Activated naive CD4-positive, alpha-beta T cell treated with anti-CD3 and anti-CD28 coated beads for 36 hours (primary cell): ENCODE measurements at regions of chr16 and their contacts with region 1.

Region 1: DNA sequence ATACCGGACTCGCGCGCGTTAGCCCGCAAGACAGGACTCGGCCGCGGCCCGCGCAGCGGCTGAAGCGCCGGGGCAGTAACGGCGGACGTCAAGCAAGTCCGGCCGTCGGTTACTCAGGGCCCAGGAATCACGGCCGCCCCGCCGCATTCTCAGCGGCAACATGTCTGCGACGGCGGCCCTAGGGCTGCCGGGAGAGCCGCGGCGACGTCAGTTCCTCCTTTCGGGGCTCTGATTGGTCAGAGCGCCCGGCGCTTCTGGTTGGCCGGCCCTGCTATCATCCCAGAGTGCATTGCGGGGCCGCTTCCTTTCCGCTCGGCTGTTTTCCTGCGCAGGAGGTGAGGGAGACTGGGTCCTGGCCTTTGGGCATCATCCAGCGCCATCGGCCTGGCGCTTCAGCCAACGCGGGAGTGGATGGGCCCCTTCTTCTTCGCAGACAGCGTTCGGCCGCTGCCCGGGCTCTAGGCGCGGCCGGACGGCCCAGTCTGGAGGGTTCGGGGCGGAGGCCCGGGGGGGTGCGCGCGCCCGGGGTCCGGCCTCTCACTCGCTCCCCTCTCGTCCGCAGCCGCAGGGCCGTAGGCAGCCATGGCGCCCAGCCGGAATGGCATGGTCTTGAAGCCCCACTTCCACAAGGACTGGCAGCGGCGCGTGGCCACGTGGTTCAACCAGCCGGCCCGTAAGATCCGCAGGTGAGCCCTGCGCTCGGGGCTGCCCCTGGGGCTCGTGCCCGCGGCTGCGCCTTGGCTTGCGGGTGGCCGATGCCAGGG is at the start of gene RPL13:
- DNase-seq: peak; percentile 96
- H3K4me3 Mint-ChIP-seq: peak within 1 kb of the TSS; percentile 97
- H3K27ac Mint-ChIP-seq: peak within 1 kb of the TSS; percentile 98
- H3K4me1 Mint-ChIP-seq: peaks cover 46% of the 10 kb centered on the region
- H3K27me3 Mint-ChIP-seq: no peaks in the 10 kb centered on the region
- total RNA-seq, gene RPL13: 3,875 to 3,899 TPM

Region 2: DNA sequence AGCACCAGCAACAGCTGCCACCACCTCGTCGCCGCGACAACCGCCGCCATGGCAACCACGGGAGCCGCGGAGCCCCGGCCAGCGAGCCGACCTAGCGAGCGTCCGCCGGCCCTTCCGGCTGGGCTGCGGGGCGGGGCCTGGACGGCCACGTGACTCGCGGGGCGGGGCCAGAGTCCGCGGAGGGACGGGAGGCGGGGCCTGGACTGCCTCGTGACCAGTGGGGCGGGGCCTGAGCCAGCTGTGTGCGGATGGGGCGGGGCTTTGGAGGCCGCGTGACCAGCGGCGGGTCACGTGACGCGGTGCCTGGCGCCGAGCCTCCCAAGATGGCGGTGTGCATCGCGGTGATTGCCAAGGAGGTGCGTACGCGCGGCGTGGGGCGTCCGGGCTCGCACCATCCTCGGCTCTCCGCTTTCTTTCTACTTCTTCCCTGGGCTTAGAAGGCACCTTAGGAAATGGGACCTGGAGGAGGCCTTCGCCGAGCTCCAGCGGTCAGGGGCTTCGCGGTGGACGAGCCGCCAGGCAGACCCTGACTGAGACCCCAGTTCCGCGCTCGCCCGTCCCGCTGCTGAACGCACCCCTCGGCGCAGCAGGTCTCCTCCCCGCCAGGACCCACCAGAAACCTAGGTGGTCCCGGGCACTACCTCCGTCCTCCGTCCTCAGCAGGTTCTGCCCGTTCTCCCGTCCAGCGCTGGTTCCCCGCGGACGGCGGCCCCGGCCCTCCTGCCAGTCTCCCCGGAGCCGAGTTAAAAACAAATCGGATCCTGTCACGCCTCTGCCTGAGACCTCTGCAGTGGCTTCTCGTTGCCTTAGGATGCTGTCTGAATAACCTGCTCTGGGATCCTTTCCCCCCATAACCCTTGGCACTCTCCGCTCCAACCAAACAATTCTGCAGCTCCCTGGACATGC is 703.5 kb before region 1 on chr16 and contains the starts of genes GALNS and TRAPPC2L:
- CTCF ChIA-PET with region 1: no interaction called
- intact Hi-C with region 1: loop called (anchors 1 kb)
- DNase-seq: peak; percentile 99
- H3K4me3 Mint-ChIP-seq: peak within 1 kb of the TSS; percentile 88
- H3K27ac Mint-ChIP-seq: peak within 1 kb of the TSS; percentile 63
- H3K4me1 Mint-ChIP-seq: peaks cover 23% of the 10 kb centered on the region
- H3K27me3 Mint-ChIP-seq: no peaks in the 10 kb centered on the region
- total RNA-seq, gene GALNS: 10.9 to 11.2 TPM
- total RNA-seq, gene TRAPPC2L: 57.7 to 66.1 TPM

Region 3: GRCh38 chr16:89099905-89100304 is 460.7 kb before region 1 on chr16:
- CTCF ChIA-PET with region 1: no interaction called
- intact Hi-C with region 1: no loop called
- DNase-seq: no peak
- H3K4me3 Mint-ChIP-seq: no peak overlapping the region
- H3K27ac Mint-ChIP-seq: peak overlapping the region; percentile 44
- H3K4me1 Mint-ChIP-seq: peaks cover 64% of the 10 kb centered on the region
- H3K27me3 Mint-ChIP-seq: no peaks in the 10 kb centered on the region

Region 4: DNA sequence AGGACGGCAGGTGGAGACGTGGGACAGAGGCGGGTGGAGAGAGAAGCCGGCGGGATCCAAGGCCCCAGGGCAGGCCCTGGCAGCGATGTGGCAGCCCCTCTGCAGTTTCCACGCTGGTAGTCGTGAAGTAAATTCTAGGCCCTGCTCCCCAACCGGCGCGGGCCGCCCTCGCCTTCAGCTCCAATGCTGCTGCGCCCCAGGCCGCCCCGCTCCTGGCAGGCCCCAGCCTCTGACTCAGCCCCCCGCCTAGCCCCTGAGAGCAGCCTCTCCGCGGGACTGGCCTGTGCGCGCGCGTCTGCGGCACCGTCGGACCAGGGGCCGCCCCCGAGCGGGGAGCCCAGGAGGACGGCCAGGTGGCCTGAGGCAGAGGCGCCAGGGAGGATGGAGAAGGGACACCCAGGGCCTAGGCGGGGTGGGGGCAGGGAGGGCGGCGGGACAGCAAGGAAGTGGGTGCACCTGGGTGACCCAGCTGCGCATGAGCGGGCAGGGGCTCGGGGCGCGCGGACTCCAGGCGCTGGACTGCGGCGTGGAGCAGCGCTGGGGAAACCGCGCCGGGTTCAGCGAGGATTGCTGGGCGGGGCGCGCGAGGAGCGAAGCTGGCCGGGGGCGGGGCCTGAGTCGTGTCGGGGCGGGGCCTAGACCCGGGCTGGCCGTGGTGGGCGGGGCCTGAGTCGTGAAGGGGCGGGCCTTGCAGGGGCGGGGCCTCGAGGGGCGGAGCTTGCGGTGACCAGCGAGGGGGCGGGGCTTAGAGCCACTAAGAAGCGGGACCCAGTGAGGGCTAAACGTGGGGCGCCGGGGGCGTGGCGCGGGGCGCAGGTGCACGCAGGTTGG is 313.4 kb before region 1 on chr16:
- CTCF ChIA-PET with region 1: interaction called, 3 read pairs
- intact Hi-C with region 1: loop called (anchors 2 kb)
- DNase-seq: peak; percentile 96
- H3K4me3 Mint-ChIP-seq: peak overlapping the region; percentile 77
- H3K27ac Mint-ChIP-seq: no peak overlapping the region
- H3K4me1 Mint-ChIP-seq: peaks cover 7% of the 10 kb centered on the region
- H3K27me3 Mint-ChIP-seq: no peaks in the 10 kb centered on the region

Region 5: DNA sequence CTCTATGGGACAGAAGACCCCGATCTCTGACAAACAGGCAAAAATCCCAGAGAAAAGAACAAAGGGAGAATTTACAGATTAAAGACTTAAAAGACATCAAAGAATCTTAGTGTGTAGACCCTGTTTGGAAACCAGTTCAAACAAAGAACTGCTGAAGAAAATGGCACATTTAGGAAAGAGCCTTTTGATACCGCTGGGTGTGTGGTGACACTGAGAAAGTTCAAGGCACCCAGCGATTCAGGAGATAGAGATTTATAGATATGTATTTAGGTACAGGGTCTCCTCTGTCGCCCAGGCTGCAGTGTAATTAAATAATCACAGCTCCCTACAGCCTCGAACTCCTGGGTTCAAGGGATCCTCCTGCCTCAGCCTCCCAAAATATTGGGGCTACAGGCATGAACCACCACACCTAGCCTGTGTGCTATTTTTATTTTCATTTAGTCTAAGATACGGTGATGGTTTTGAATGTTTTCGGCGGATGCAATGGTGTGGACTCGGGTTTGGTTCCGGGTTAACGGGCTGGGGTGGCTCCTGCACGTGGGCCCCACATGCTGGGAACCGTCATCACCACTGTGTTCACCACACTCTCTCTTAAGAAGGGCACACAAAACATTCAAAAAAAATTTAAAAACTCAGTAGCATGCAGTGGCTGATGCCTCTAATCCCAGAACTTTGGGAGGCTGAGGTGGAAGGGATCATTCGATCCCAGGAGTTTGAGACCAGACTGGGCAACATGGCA is 229.0 kb before region 1 on chr16:
- CTCF ChIA-PET with region 1: no interaction called
- intact Hi-C with region 1: loop called (anchors 2 kb)
- DNase-seq: no peak
- H3K4me3 Mint-ChIP-seq: no peak overlapping the region
- H3K27ac Mint-ChIP-seq: peak overlapping the region; percentile 56
- H3K4me1 Mint-ChIP-seq: peaks cover 86% of the 10 kb centered on the region
- H3K27me3 Mint-ChIP-seq: no peaks in the 10 kb centered on the region

Region 6: GRCh38 chr16:89490387-89491237 is 69.9 kb before region 1 on chr16 and contains the start of gene ANKRD11:
- CTCF ChIA-PET with region 1: interaction called, 3 read pairs
- intact Hi-C with region 1: loop called (anchors 1 kb)
- DNase-seq: peak; percentile 99
- H3K4me3 Mint-ChIP-seq: peak within 1 kb of the TSS; percentile 96
- H3K27ac Mint-ChIP-seq: peak within 1 kb of the TSS; percentile 98
- H3K4me1 Mint-ChIP-seq: peaks cover 50% of the 10 kb centered on the region
- H3K27me3 Mint-ChIP-seq: no peaks in the 10 kb centered on the region
- total RNA-seq, gene ANKRD11: 174 to 177 TPM

Region 7: GRCh38 chr16:89549007-89549700 is 11.4 kb before region 1 on chr16:
- CTCF ChIA-PET with region 1: interaction called, 17 read pairs
- intact Hi-C with region 1: no loop called
- DNase-seq: peak; percentile 25
- H3K4me3 Mint-ChIP-seq: no peak overlapping the region
- H3K27ac Mint-ChIP-seq: peak overlapping the region; percentile 44
- H3K4me1 Mint-ChIP-seq: peaks cover 22% of the 10 kb centered on the region
- H3K27me3 Mint-ChIP-seq: no peaks in the 10 kb centered on the region